ENCODE measurements at regions of chr7 and their contacts with region 1.

Region 1: DNA sequence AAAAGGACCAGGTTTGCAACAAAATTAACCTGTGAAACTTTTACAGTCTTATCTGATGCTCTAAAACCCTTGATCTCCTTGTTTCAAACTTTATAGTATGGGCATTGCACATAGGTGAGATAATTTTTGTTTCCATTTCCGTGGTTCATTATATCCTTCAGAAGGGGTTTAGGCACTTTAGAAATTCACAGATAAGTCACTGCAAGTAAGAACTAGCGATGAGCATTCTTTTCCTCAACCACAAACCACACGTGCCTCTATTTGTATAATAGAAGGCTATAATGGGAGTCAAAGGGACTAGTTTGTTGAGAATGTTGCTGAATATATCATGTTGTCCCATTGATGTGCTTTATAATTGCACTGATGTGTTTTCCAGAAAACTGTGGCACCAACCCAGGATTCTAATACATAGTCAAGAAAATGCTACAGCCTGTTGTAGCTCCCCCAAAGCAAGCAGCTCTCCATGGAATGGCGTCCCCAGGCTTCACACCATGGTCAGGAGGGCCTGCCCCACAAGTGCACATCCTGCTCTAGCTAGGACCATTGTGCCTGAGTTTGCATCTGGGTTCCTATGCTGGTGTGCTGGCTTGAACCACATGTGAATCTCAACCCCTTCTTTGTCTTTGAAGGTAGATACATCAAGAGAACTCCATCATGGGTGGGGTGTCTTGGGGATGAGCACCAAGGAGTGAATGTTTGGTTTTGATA is 14.0 kb upstream of the ATXN7L1 start:
- DNase-seq: peak; percentile 72
- H3K4me3 Mint-ChIP-seq: no peak overlapping the region
- H3K27ac Mint-ChIP-seq: no peak overlapping the region
- H3K4me1 Mint-ChIP-seq: peaks cover 29% of the 10 kb centered on the region
- H3K27me3 Mint-ChIP-seq: no peaks in the 10 kb centered on the region

Region 2: GRCh38 chr7:105713488-105714465 is 176.7 kb before region 1 on chr7:
- CTCF ChIA-PET with region 1: no interaction called
- intact Hi-C with region 1: no loop called
- DNase-seq: no peak
- H3K4me3 Mint-ChIP-seq: no peak overlapping the region
- H3K27ac Mint-ChIP-seq: no peak overlapping the region
- H3K4me1 Mint-ChIP-seq: no peaks in the 10 kb centered on the region
- H3K27me3 Mint-ChIP-seq: no peaks in the 10 kb centered on the region

Region 3: DNA sequence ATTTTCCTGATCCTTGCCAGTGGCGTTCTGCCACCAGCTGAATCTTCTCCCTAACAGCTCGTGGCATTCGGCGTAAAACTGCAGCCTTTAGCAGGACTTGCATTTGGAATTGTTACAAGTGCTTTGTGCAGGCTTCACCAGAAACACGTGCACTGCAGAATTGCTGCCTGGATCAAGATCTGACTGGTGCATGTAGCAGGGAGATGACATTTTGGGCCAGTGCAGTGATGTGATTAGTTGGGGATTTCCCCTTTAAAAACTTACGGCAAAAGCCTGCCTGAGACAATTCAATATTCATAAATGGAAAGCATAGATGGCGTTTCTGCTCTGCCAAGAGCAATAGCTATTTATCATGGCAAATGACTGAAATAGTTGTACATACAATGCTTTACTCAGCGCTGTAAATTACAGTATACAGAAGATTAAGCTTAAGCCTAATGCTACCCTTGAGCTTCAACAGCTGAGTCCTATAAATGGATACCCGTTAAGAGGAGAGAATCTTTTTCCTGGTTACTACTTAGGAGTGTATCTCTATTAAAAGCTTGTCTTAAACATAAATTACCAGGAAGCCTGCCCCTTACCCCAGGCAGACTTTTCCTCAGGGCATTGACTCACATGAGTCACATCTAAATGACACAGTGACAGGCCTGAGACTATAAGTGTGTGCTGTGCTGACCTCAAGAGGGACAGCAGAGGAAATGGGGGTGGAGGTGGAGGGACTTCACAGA is 120.4 kb before region 1 on chr7:
- CTCF ChIA-PET with region 1: interaction called, 4 read pairs
- intact Hi-C with region 1: loop called (anchors 1 kb)
- DNase-seq: peak; percentile 39
- H3K4me3 Mint-ChIP-seq: no peak overlapping the region
- H3K27ac Mint-ChIP-seq: no peak overlapping the region
- H3K4me1 Mint-ChIP-seq: peaks cover 26% of the 10 kb centered on the region
- H3K27me3 Mint-ChIP-seq: no peaks in the 10 kb centered on the region

Region 4: GRCh38 chr7:105849122-105849855 is 41.2 kb before region 1 on chr7:
- CTCF ChIA-PET with region 1: no interaction called
- intact Hi-C with region 1: loop called (anchors 1 kb)
- DNase-seq: peak; percentile 83
- H3K4me3 Mint-ChIP-seq: no peak overlapping the region
- H3K27ac Mint-ChIP-seq: no peak overlapping the region
- H3K4me1 Mint-ChIP-seq: peaks cover 44% of the 10 kb centered on the region
- H3K27me3 Mint-ChIP-seq: no peaks in the 10 kb centered on the region

Region 5: GRCh38 chr7:105924945-105925344 is 34.5 kb after region 1 on chr7:
- CTCF ChIA-PET with region 1: no interaction called
- intact Hi-C with region 1: loop called (anchors 1 kb)
- DNase-seq: peak; percentile 60
- H3K4me3 Mint-ChIP-seq: no peak overlapping the region
- H3K27ac Mint-ChIP-seq: peak overlapping the region; percentile 9
- H3K4me1 Mint-ChIP-seq: peaks cover 26% of the 10 kb centered on the region
- H3K27me3 Mint-ChIP-seq: peaks cover 2% of the 10 kb centered on the region

Measured in activated naive CD4-positive, alpha-beta T cell treated with anti-CD3 and anti-CD28 coated beads for 36 hours (primary cell).